ENCODE measurements at regions of chrX and their contacts with region 1.

Region 1: GRCh38 chrX:45515262-45516215 is 314.9 kb upstream of the DIPK2B start:
- DNase-seq: peak in 6 of 10 donors; percentile 24 to 64 (median 52)
- H3K4me3 ChIP-seq: peak overlapping the region in 13 of 59 donors; percentile 1 to 37 (median 18)
- H3K27ac ChIP-seq: peak overlapping the region in 14 of 59 donors; percentile 5 to 64 (median 28)
- H3K27me3 ChIP-seq: peaks cover 0 to 74% (median 19%) of the 10 kb centered on the region in 45 donors
- CTCF ChIP-seq: peak in 55 of 56 donors; percentile 27 to 73 (median 54)

Region 2: GRCh38 chrX:45849253-45849862 is 333.8 kb after region 1 on chrX:
- intact Hi-C with region 1: loop called in 1 of 2 experiments (anchors 10 kb)
- DNase-seq: no peak
- H3K4me3 ChIP-seq: peak overlapping the region in 49 of 59 donors; percentile 3 to 68 (median 34)
- H3K27ac ChIP-seq: peak overlapping the region in 17 of 59 donors; percentile 1 to 47 (median 26)
- H3K27me3 ChIP-seq: peaks cover 0 to 70% (median 23%) of the 10 kb centered on the region in 45 donors
- CTCF ChIP-seq: peak in 27 of 56 donors; percentile 13 to 41 (median 24)

Region 3: DNA sequence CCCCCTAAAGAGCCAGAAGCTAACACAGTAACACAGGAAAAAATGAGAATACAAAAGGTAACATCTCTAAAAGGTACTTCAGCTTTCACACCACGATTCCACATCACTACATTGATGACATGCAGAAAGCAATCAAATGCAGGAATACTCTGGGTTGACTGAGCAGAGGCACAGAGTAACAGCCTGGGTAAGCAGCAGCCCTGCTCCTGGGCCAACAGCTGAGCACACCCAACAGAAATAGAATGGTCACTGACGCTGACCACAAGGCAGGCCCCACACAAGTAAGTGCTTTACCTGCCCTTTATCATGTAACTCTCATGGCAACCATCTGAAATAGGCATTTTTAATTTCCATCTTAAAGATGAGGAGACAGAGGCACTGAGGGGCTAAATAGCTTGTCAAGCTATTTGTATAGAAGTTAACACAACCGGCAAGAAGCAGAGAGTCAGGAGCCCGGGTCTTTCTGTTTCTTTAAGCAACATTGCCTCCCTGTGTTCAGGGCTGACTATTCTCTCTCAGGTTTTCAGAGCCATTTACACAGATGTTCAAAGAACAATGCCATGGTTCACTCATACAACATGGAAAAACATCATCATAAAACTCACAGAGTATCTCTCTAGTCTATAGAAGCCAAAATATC is 860.8 kb after region 1 on chrX:
- intact Hi-C with region 1: loop called in 1 of 2 experiments (anchors 10 kb)
- DNase-seq: peak in 1 of 10 donors; percentile 44
- H3K4me3 ChIP-seq: no peak overlapping the region
- H3K27ac ChIP-seq: peak overlapping the region in 8 of 59 donors; percentile 2 to 53 (median 28)
- H3K27me3 ChIP-seq: peaks cover 0 to 52% (median 7%) of the 10 kb centered on the region in 45 donors
- CTCF ChIP-seq: peak in 43 of 56 donors; percentile 7 to 57 (median 32)

Measured in dorsolateral prefrontal cortex (tissue), 120 donors.